ENCODE measurements at regions of chr9 and their contacts with region 1.

Region 1: GRCh38 chr9:27276193-27277030 is 20.5 kb downstream of the EQTN start:
- DNase-seq: no peak
- H3K4me3 ChIP-seq: peak overlapping the region in 1 of 8 donors; percentile 29
- H3K27ac ChIP-seq: no peak overlapping the region
- H3K4me1 ChIP-seq: peaks cover 0 to 15% (median 7%) of the 10 kb centered on the region in 6 donors
- H3K27me3 ChIP-seq: no peaks in the 10 kb centered on the region
- CTCF ChIP-seq: peak; percentile 14 to 73 (median 66)
- POLR2A ChIP-seq: no peak

Region 2: GRCh38 chr9:27033823-27034403 is 242.5 kb before region 1 on chr9:
- intact Hi-C with region 1: loop called (anchors 5 kb)
- DNase-seq: no peak
- H3K4me3 ChIP-seq: no peak overlapping the region
- H3K27ac ChIP-seq: no peak overlapping the region
- H3K4me1 ChIP-seq: peaks cover 0 to 6% (median 0%) of the 10 kb centered on the region in 6 donors
- H3K27me3 ChIP-seq: no peaks in the 10 kb centered on the region
- CTCF ChIP-seq: peak; percentile 17 to 80 (median 70)
- POLR2A ChIP-seq: no peak

Measured in spleen (tissue), 13 donors.